IMR-90 (cell line): ENCODE measurements at regions of chr20 and their contacts with region 1.

Region 1: GRCh38 chr20:44609511-44610312 is 27.3 kb downstream of the PKIG start:
- DNase-seq: peak; percentile 78
- ATAC-seq: peak; percentile 100
- H3K4me3 ChIP-seq: no peak overlapping the region
- H3K27ac ChIP-seq: peak overlapping the region; percentile 46
- H3K4me1 ChIP-seq: peaks cover 9% of the 10 kb centered on the region
- H3K27me3 ChIP-seq: no peaks in the 10 kb centered on the region
- CTCF ChIP-seq: peak; percentile 99
- POLR2A ChIP-seq: peak; percentile 64
- RAD21 ChIP-seq: peak; percentile 100

Region 2: GRCh38 chr20:44210422-44211176 is 399.1 kb before region 1 on chr20 and contains the start of gene OSER1:
- CTCF ChIA-PET with region 1: no interaction called
- POLR2A ChIA-PET with region 1: no interaction called
- dilution Hi-C with region 1: no loop called
- in situ Hi-C with region 1: loop called (anchors 10 kb)
- intact Hi-C with region 1: no loop called
- DNase-seq: peak; percentile 95
- ATAC-seq: peak; percentile 90
- H3K4me3 ChIP-seq: peak within 1 kb of the TSS; percentile 77
- H3K27ac ChIP-seq: peak within 1 kb of the TSS; percentile 75
- H3K4me1 ChIP-seq: peaks cover 4% of the 10 kb centered on the region; the same call in 1 of the 2 replicates
- H3K27me3 ChIP-seq: no peaks in the 10 kb centered on the region
- CTCF ChIP-seq: no peak
- POLR2A ChIP-seq: peak; percentile 92
- RAD21 ChIP-seq: no peak
- total RNA-seq, gene OSER1: 66.9 and 70.6 TPM in 2 replicates

Region 3: DNA sequence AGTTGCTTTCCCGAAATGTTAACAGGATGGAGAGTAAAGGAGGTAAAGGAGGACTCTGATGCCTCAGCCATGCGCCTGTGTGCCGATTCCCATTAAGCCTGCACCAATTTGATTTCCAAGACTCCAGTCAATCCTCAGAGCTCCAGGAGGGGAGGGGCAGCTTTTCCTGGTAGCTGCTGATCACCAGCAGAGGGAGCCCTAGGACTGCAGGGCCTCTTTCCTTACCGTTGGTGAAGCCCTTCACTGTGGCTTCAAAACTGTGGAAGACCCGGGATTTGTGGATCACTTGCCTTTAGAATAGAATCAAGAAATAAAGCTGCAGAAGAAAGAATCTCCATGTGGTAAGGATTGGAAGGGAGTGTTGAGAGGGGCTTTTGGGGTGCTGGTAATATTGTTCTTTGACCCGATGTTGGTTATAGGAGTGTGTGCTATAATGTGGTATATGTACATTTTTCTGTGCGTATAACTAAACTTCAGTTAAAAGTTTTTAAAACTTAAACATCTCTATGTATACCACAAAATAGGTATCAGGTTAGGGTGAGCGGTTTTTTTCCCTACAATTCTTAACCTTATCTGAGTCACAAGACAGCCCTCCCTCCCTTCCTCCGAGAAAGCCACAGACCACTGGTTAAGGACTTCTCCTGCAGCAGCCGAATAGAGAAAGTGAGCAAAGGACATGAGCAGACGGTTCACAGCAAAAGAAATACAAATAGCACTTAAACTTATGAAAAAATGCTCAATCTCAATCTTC is 392.2 kb before region 1 on chr20:
- CTCF ChIA-PET with region 1: no interaction called
- POLR2A ChIA-PET with region 1: no interaction called
- dilution Hi-C with region 1: no loop called
- in situ Hi-C with region 1: loop called (anchors 10 kb)
- intact Hi-C with region 1: loop called (anchors 1 kb)
- DNase-seq: peak; percentile 67
- ATAC-seq: peak; percentile 88
- H3K4me3 ChIP-seq: no peak overlapping the region
- H3K27ac ChIP-seq: no peak overlapping the region
- H3K4me1 ChIP-seq: no peaks in the 10 kb centered on the region
- H3K27me3 ChIP-seq: no peaks in the 10 kb centered on the region
- CTCF ChIP-seq: peak; percentile 88
- POLR2A ChIP-seq: no peak
- RAD21 ChIP-seq: peak; percentile 88

Region 4: DNA sequence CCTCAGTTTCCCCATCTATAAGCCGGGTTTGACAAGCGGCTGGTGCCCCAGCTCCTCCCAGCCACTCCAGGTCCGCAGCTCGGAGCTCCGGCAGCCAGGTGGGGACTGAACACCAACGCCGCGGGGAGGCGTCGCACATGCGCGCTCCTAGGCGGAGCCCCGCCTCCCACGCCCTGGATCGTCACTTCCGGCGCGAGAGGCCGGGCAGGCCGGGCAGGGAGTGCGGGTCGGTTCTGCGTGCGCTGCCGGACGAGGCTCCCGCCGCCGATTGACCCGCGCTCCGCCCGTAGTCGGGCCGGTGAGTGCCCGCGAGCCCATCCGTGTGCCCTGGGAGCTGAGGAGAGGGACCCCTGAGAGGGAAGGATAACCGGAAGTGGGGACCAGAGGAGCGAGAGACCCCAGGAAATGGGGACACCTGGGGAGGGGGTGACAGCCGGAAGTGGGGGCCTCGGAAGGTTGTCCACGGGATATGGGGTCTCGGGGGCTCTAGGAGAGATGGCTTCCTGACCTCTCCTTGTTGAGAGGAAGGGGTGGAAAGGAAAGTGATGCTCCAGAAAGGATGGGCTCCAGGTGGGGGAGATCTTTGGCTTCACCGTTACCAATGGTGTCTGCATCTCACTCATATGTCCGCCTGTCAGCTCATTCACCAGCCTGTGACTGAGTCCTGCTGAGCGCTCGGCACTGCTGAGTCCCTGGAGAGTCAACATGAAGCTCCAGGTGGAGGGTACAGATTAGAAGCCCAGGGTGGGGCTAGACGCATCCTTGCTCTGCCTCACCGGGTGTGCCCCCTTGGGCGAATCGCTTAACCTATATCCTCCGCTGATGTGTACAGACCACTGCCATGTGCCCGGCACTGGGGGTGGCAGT is 133.8 kb before region 1 on chr20 and contains the start of gene TTPAL:
- CTCF ChIA-PET with region 1: interaction called, 6 read pairs
- POLR2A ChIA-PET with region 1: no interaction called
- dilution Hi-C with region 1: no loop called
- in situ Hi-C with region 1: loop called (anchors 10 kb)
- intact Hi-C with region 1: loop called (anchors 1 kb)
- DNase-seq: peak; percentile 82
- ATAC-seq: peak; percentile 97
- H3K4me3 ChIP-seq: peak within 1 kb of the TSS; percentile 87
- H3K27ac ChIP-seq: peak within 1 kb of the TSS; percentile 90
- H3K4me1 ChIP-seq: peaks cover 4% of the 10 kb centered on the region; the same call in 1 of the 2 replicates
- H3K27me3 ChIP-seq: no peaks in the 10 kb centered on the region
- CTCF ChIP-seq: peak; percentile 38
- POLR2A ChIP-seq: peak; percentile 96
- RAD21 ChIP-seq: peak; percentile 34
- total RNA-seq, gene TTPAL: 8.2 and 11.9 TPM in 2 replicates

Region 5: GRCh38 chr20:44495802-44496481 is 113.8 kb before region 1 on chr20:
- CTCF ChIA-PET with region 1: no interaction called
- POLR2A ChIA-PET with region 1: no interaction called
- dilution Hi-C with region 1: no loop called
- in situ Hi-C with region 1: no loop called
- intact Hi-C with region 1: loop called (anchors 5 kb)
- DNase-seq: peak; percentile 99
- ATAC-seq: peak; percentile 45
- H3K4me3 ChIP-seq: no peak overlapping the region
- H3K27ac ChIP-seq: peak overlapping the region; percentile 63
- H3K4me1 ChIP-seq: peaks cover 31% of the 10 kb centered on the region
- H3K27me3 ChIP-seq: no peaks in the 10 kb centered on the region
- CTCF ChIP-seq: no peak
- POLR2A ChIP-seq: no peak
- RAD21 ChIP-seq: no peak

Region 6: GRCh38 chr20:44521484-44522481 is 87.9 kb before region 1 on chr20 and contains the start of gene SERINC3:
- CTCF ChIA-PET with region 1: no interaction called
- POLR2A ChIA-PET with region 1: no interaction called
- dilution Hi-C with region 1: no loop called
- in situ Hi-C with region 1: no loop called
- intact Hi-C with region 1: loop called (anchors 2 kb)
- DNase-seq: peak; percentile 96
- ATAC-seq: peak; percentile 99
- H3K4me3 ChIP-seq: peak within 1 kb of the TSS; percentile 89
- H3K27ac ChIP-seq: peak within 1 kb of the TSS; percentile 97
- H3K4me1 ChIP-seq: peaks cover 11% of the 10 kb centered on the region
- H3K27me3 ChIP-seq: no peaks in the 10 kb centered on the region
- CTCF ChIP-seq: no peak
- POLR2A ChIP-seq: peak; percentile 92
- RAD21 ChIP-seq: no peak
- total RNA-seq, gene SERINC3: 88.3 and 101 TPM in 2 replicates

Region 7: GRCh38 chr20:44532259-44532980 is 77.3 kb before region 1 on chr20:
- CTCF ChIA-PET with region 1: no interaction called
- POLR2A ChIA-PET with region 1: no interaction called
- dilution Hi-C with region 1: no loop called
- in situ Hi-C with region 1: loop called (anchors 10 kb)
- intact Hi-C with region 1: loop called (anchors 2 kb)
- DNase-seq: no peak
- ATAC-seq: no peak
- H3K4me3 ChIP-seq: peak overlapping the region; percentile 45
- H3K27ac ChIP-seq: peak overlapping the region; percentile 54; the same call in 1 of the 2 replicates
- H3K4me1 ChIP-seq: peaks cover 3% of the 10 kb centered on the region
- H3K27me3 ChIP-seq: no peaks in the 10 kb centered on the region
- CTCF ChIP-seq: no peak
- POLR2A ChIP-seq: no peak
- RAD21 ChIP-seq: no peak

Region 8: GRCh38 chr20:44819936-44820335 is 210.2 kb after region 1 on chr20:
- CTCF ChIA-PET with region 1: no interaction called
- POLR2A ChIA-PET with region 1: no interaction called
- dilution Hi-C with region 1: no loop called
- in situ Hi-C with region 1: no loop called
- intact Hi-C with region 1: no loop called
- DNase-seq: no peak
- ATAC-seq: no peak
- H3K4me3 ChIP-seq: no peak overlapping the region
- H3K27ac ChIP-seq: no peak overlapping the region
- H3K4me1 ChIP-seq: no peaks in the 10 kb centered on the region
- H3K27me3 ChIP-seq: peaks cover 19% of the 10 kb centered on the region
- CTCF ChIP-seq: no peak
- POLR2A ChIP-seq: no peak
- RAD21 ChIP-seq: no peak